ENCODE measurements at regions of chr14 and their contacts with region 1.

Region 1: GRCh38 chr14:74961238-74961911 is 6.0 kb upstream of the PGF start:
- DNase-seq: no peak
- ATAC-seq: no peak
- H3K4me3 ChIP-seq: no peak overlapping the region
- H3K27ac ChIP-seq: no peak overlapping the region
- H3K4me1 ChIP-seq: 0 out of 4 replicates have a peak, but pooled peaks cover 0 to 2% of the 10 kb centered on the region in 2 experiments
- H3K27me3 ChIP-seq: no peaks in the 10 kb centered on the region
- CTCF ChIP-seq: no peak
- POLR2A ChIP-seq: no peak
- RAD21 ChIP-seq: no peak

Region 2: DNA sequence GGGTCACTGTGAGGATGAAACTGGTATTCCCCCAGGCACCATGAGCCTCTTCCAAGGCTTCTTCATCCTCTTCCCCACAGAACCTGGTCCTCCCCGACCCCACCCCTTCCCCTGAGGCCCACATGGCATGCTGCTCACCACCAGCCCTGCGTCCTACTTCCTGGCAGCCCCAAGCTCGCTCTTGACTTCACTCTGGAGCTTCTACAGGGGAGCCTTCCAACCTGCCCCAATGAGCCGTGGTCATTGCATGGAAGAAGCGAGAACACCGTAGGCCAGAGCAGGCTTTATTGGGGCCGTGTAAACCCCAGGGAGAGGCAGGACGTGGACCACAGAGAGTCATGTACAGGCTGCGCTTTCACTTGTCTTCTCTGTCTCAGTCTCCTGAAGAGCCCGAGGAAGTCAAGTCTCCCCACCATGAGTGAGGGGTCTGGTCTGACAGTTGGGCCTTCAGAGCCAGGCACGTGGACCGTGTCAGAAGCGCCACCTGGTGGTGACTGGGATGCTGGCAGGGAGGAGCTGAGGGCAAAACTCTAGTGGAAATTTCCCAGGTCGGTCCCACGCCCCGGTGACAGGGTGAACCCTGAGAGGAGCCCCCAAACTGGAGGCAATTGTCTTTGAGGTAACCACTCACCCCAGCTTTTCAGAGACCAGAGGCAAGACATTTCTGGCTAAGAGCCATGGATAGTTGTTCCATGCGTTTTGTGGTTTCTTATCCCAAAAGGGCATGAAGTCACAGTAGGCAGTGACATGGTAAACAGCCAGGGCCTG is 55.8 kb before region 1 on chr14:
- CTCF ChIA-PET with region 1: no interaction called
- POLR2A ChIA-PET with region 1: no interaction called
- RAD21 ChIA-PET with region 1: no interaction called
- intact Hi-C with region 1: no loop called
- DNase-seq: peak; percentile 28
- ATAC-seq: peak; percentile 68
- H3K4me3 ChIP-seq: no peak overlapping the region
- H3K27ac ChIP-seq: no peak overlapping the region
- H3K4me1 ChIP-seq: peaks cover 3 to 8% of the 10 kb centered on the region in 2 experiments; a peak in 2 of 4 replicates
- H3K27me3 ChIP-seq: no peaks in the 10 kb centered on the region
- CTCF ChIP-seq: peak; percentile 75 to 98 (median 97); a peak in 5 of 6 replicates
- POLR2A ChIP-seq: no peak
- RAD21 ChIP-seq: peak; percentile 71

Region 3: DNA sequence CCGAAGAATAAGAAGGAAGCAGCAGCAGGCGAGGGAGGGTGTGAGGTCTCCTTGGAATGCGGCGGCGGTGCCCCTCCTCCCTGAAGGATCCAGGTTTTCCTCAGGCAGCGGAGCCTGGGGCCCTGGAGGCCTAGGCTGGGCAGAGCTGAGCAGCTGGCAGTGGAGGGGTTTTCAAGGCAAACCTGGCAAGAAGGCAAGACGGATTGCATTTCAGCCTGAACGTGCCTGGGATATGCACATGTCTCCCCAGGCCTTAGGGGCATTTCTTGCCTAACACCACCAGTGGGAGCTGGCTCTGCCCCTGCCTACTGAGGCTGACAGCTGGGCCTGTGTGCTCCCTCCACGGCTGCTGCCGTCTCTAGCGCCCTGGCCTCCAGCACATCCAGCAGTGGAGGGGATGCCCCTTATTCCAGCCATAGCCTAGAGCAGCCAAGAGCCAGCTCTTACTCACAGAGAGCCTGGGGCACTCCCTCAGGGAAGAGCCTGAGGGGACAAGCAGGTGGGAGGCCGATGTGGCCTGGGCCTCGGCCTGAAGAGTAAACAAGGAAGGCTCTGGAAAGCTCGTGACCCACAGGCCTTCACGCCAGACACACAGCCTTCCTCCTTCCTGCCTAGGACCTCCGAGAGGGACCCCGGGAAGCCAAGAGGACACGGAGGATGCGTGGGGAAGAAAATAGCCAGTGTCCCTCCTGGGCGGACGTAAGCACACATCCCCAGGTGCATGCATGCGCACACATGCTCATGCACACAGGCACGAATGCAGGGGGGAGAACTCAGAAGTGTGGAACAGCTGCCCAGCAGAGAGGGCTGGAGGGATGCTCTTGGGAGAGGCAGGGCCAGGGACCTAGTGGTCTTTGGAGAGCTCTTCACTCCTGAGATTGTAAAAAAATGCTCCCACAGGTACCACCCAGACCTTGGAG is 18.3 kb after region 1 on chr14:
- CTCF ChIA-PET with region 1: no interaction called
- POLR2A ChIA-PET with region 1: no interaction called
- RAD21 ChIA-PET with region 1: interaction called in 1 of 2 experiments, 10 read pairs
- intact Hi-C with region 1: no loop called
- DNase-seq: no peak
- ATAC-seq: peak; percentile 63
- H3K4me3 ChIP-seq: no peak overlapping the region
- H3K27ac ChIP-seq: no peak overlapping the region
- H3K4me1 ChIP-seq: no peaks in the 10 kb centered on the region
- H3K27me3 ChIP-seq: no peaks in the 10 kb centered on the region
- CTCF ChIP-seq: no peak
- POLR2A ChIP-seq: no peak
- RAD21 ChIP-seq: no peak

Region 4: GRCh38 chr14:75249251-75249957 is 288.0 kb after region 1 on chr14:
- CTCF ChIA-PET with region 1: no interaction called
- POLR2A ChIA-PET with region 1: no interaction called
- RAD21 ChIA-PET with region 1: no interaction called
- intact Hi-C with region 1: no loop called
- DNase-seq: no peak
- ATAC-seq: no peak
- H3K4me3 ChIP-seq: no peak overlapping the region
- H3K27ac ChIP-seq: no peak overlapping the region
- H3K4me1 ChIP-seq: peaks cover 0 to 4% of the 10 kb centered on the region in 2 experiments; a peak in 1 of 4 replicates
- H3K27me3 ChIP-seq: no peaks in the 10 kb centered on the region
- CTCF ChIP-seq: no peak
- POLR2A ChIP-seq: no peak
- RAD21 ChIP-seq: no peak

Region 5: DNA sequence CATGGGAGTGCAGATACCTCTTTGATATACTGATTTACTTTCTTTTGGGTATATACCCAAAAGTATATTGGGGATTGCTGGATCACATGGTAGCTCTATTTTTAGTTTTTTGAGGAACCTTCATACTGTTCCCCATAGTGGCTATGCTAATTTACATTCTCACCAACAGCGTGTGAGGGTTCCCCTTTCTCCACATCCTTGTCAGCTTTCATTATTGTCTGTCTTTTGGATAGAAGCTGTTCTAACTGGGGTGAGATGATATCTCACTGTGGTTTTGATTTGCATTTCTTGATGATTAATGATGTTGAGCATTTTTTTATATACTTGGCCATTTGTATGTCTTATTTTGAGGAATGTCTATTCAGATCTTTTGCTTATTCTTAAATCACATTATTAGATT is 422.3 kb after region 1 on chr14:
- CTCF ChIA-PET with region 1: no interaction called
- POLR2A ChIA-PET with region 1: no interaction called
- RAD21 ChIA-PET with region 1: no interaction called
- intact Hi-C with region 1: no loop called
- DNase-seq: no peak
- ATAC-seq: no peak
- H3K4me3 ChIP-seq: no peak overlapping the region
- H3K27ac ChIP-seq: no peak overlapping the region
- H3K4me1 ChIP-seq: no peaks in the 10 kb centered on the region
- H3K27me3 ChIP-seq: peaks cover 17% of the 10 kb centered on the region
- CTCF ChIP-seq: no peak
- POLR2A ChIP-seq: no peak
- RAD21 ChIP-seq: no peak

Measured in HCT116 (cell line).